ENCODE measurements at regions of chr12 and their contacts with region 1.

Region 1: DNA sequence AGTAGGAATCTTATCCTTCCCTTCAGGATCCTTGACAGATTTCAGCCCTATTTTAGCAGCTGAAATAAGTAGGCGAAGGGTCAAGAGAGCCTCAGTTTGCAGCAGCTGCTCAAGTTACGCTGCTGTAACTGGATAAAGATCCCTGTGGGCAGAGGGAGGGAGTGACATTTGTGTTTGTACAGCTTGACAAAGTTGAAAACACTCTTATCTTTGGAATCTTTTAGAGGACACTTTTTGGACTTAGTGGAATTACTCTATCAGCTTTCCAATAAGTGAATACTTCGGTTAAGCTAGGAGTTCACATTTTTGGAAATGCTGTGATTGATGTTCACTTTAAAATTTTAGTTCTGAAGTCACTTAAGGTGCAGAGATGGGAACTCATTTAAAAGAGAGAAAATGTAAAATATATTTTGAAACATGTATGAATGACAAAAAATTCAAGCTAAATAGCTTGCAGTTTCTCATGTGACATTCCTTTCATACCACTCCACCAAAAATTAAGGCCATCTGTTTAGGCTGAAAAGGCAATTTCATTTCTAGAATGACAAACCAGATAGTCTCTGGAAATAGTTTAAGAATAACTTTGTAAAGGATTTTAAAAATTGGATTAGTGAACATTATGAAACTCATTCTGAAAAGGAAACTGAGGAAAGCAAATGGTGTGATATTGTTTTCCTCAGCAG is 55.2 kb downstream of the SLC38A4 start:
- DNase-seq: peak; percentile 63 to 64
- ATAC-seq: peak; percentile 75 to 79
- H3K4me3 ChIP-seq: peak overlapping the region in 3 of 4 donors; percentile 0 to 21 (median 10)
- H3K27ac ChIP-seq: peak overlapping the region; percentile 85 to 90 (median 88)
- H3K4me1 ChIP-seq: peaks cover 50 to 67% of the 10 kb centered on the region in 2 donors
- H3K27me3 ChIP-seq: no peaks in the 10 kb centered on the region
- CTCF ChIP-seq: peak in 1 of 5 experiments; percentile 8
- POLR2A ChIP-seq: peak in 1 of 2 donors; percentile 56

Region 2: GRCh38 chr12:46556105-46556559 is 214.5 kb before region 1 on chr12:
- in situ Hi-C with region 1: no loop called
- intact Hi-C with region 1: loop called (anchors 10 kb)
- DNase-seq: peak in 1 of 2 donors; percentile 40
- ATAC-seq: peak; percentile 43 to 89
- H3K4me3 ChIP-seq: peak overlapping the region in 1 of 4 donors; percentile 0
- H3K27ac ChIP-seq: peak overlapping the region; percentile 68 to 90 (median 80)
- H3K4me1 ChIP-seq: peaks cover 72 to 82% of the 10 kb centered on the region in 2 donors
- H3K27me3 ChIP-seq: no peaks in the 10 kb centered on the region
- CTCF ChIP-seq: no peak
- POLR2A ChIP-seq: peak in 1 of 2 donors; percentile 34

Region 3: DNA sequence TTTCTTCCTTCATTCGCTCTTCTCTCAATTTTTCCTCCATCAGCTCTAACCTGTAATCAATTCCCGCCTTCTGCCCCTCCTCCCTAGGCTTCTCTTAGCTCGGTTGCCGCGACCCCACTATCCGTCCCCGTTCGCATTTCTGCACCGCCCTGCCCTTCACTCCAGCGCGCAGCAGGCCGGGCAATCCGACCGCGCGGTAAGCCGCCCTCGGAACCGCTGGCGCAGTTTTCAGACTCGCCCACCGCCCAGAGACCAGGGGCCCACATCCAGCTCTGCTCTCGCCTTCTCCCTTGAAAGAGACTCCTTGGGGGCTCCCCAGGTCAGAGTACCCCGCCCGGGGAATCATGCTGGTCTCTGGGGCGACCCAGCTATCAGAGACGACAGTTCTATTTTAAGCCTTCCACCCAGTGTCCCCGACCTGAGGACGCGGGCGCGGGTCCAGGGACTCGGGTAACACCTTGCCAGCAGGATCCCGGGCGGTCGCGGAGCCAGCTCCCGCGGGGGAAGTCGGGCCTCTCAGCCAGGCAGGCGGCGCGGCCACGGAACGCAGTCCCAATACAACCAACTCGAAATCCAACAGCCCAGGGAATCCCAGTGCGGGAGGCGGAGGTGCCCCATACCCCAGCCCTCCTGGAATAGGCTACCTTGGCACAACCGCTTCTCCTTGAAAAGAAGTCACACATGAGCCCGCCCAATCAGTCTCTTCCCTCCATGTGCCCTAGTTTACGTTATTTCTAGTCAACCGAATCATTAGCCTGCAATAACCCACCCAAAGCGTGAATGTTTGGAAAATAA is 60.9 kb after region 1 on chr12:
- in situ Hi-C with region 1: loop called in 1 of 4 experiments (anchors 5 kb)
- intact Hi-C with region 1: no loop called
- DNase-seq: peak; percentile 70 to 88
- ATAC-seq: peak; percentile 84 to 88
- H3K4me3 ChIP-seq: peak overlapping the region; percentile 63 to 75 (median 70)
- H3K27ac ChIP-seq: peak overlapping the region; percentile 88 to 95 (median 92)
- H3K4me1 ChIP-seq: peaks cover 9 to 13% of the 10 kb centered on the region in 2 donors
- H3K27me3 ChIP-seq: no peaks in the 10 kb centered on the region
- CTCF ChIP-seq: no peak
- POLR2A ChIP-seq: peak in 1 of 2 donors; percentile 71

Region 4: DNA sequence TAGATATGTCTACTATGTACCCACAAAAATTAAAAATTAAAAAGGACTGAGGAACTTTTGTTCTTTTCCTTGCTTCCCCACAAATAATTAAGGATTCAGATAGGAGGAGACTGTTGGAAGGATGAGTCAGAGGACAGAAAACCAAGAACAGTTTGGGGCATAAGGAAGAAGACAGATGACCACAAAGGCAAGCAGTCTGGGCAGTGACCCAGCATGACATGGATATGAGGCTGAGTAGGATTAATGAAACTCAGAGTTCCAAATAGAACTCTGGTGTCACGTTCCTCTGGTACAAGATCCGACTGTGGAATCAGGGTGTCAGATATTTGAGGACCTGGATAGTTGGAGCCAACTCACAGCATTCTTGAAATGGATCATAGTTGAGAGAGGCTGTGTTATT is 144.4 kb after region 1 on chr12:
- in situ Hi-C with region 1: no loop called
- intact Hi-C with region 1: loop called (anchors 5 kb)
- DNase-seq: peak; percentile 92 to 96
- ATAC-seq: peak; percentile 99
- H3K4me3 ChIP-seq: no peak overlapping the region
- H3K27ac ChIP-seq: peak overlapping the region; percentile 71 to 82 (median 76)
- H3K4me1 ChIP-seq: peaks cover 16 to 27% of the 10 kb centered on the region in 2 donors
- H3K27me3 ChIP-seq: no peaks in the 10 kb centered on the region
- CTCF ChIP-seq: no peak
- POLR2A ChIP-seq: no peak

Region 5: GRCh38 chr12:47247433-47247832 is 476.8 kb after region 1 on chr12:
- in situ Hi-C with region 1: no loop called
- intact Hi-C with region 1: no loop called
- DNase-seq: no peak
- ATAC-seq: no peak
- H3K4me3 ChIP-seq: no peak overlapping the region
- H3K27ac ChIP-seq: no peak overlapping the region
- H3K4me1 ChIP-seq: no peaks in the 10 kb centered on the region
- H3K27me3 ChIP-seq: no peaks in the 10 kb centered on the region
- CTCF ChIP-seq: no peak
- POLR2A ChIP-seq: no peak